CD14-positive monocyte (primary cell): ENCODE measurements at regions of chr14 and their contacts with region 1.

Region 1: DNA sequence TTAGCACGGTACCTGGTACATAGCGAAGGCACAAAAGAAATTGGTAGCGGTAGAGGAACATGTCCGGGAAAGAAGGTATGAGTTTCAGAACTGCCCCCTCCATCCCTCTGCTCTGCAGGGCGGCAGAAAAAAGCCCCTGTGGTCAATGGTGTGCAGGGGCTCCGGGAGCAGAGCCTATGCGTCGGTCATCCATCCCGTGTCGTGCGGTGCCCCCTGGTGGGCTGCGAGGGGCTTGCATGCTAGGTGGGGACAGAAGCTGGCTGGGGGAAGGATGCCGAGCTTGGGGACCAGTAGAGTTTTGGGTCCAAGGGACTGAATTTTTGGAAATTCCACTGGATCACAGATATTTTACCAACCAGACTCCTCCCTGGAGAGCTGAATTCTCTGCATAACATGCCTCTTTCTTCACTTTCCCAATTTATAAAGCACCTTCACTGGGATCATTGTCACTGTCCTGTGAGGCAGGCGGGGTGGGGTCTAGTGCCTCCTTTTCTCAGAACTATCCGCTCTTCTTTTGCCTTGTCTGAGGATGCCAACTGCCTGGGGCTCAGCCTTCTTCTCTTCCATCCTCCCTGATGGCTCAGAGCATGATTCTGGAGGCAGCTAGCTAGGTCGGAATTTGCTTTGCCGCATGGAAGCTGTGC is 148.7 kb downstream of the SMOC1 start:
- DNase-seq: peak; percentile 29 to 46 (median 34)
- H3K4me3 ChIP-seq: no peak overlapping the region
- H3K4me3 Mint-ChIP-seq: no peak overlapping the region
- H3K27ac ChIP-seq: no peak overlapping the region
- H3K27ac Mint-ChIP-seq: no peak overlapping the region
- H3K4me1 ChIP-seq: no peaks in the 10 kb centered on the region
- H3K4me1 Mint-ChIP-seq: no peaks in the 10 kb centered on the region
- H3K27me3 ChIP-seq: no peaks in the 10 kb centered on the region
- H3K27me3 Mint-ChIP-seq: peaks cover 0 to 9% (median 0%) of the 10 kb centered on the region in 3 donors
- CTCF ChIP-seq: peak; percentile 85

Region 2: DNA sequence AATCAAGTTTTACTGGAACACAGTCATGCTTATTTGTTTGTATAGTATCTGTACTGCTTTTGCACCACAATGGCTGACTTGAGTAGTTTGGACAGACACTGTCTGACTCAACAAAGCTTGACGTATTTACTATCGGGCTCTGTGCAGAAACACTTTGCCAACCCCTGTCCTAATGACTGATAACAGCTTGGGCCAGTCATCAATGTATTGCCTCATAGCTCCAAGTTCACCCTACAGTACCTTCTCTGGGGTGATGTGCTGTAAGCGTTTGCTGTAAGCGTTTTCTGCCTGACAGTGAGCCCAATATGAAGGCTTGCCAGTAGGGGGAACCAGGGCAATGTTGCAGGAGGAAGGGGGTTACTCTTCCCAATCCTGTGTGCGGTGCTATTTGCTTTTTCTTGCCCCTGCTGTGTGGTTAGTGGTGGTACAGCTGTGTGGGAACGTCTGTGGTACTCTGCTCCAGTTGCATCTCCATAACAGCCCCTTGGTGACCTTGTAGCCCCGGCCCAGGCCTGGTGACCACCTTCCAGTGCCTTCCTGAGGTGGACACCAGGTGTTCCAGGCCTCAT is 447.8 kb before region 1 on chr14:
- intact Hi-C with region 1: loop called in 1 of 2 experiments (anchors 10 kb)
- DNase-seq: peak; percentile 14 to 45 (median 20)
- H3K4me3 ChIP-seq: no peak overlapping the region
- H3K4me3 Mint-ChIP-seq: no peak overlapping the region
- H3K27ac ChIP-seq: no peak overlapping the region
- H3K27ac Mint-ChIP-seq: peak overlapping the region in 1 of 7 donors; percentile 85
- H3K4me1 ChIP-seq: peaks cover 4 to 7% of the 10 kb centered on the region in 2 donors
- H3K4me1 Mint-ChIP-seq: peaks cover 19% of the 10 kb centered on the region
- H3K27me3 ChIP-seq: peaks cover 0 to 30% of the 10 kb centered on the region in 2 donors
- H3K27me3 Mint-ChIP-seq: peaks cover 31 to 40% (median 32%) of the 10 kb centered on the region in 3 donors
- CTCF ChIP-seq: peak; percentile 42

Region 3: DNA sequence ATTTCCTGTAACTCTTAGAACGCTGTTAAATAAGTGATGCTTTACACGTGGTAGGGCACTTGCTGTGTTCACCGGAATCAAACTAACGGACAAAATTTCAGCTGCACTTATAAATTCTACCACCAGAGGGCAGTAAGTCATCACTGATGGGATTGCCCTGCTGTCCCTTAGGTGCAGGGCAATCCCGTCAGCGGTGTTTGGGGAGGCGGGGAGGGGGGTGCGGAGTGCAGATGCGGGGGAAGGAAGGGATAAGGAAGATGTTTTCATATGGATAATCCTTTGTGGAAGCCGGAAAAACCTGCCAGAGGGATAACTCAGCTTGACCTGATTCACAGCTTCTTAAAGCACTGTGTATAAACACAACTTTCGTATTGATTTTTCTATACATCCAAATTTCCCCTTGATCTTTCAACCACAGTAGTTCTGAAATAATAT is 209.1 kb before region 1 on chr14:
- intact Hi-C with region 1: loop called (anchors 1 to 2 kb)
- DNase-seq: peak; percentile 44 to 63 (median 53)
- H3K4me3 ChIP-seq: no peak overlapping the region
- H3K4me3 Mint-ChIP-seq: no peak overlapping the region
- H3K27ac ChIP-seq: no peak overlapping the region
- H3K27ac Mint-ChIP-seq: no peak overlapping the region
- H3K4me1 ChIP-seq: no peaks in the 10 kb centered on the region
- H3K4me1 Mint-ChIP-seq: peaks cover 2% of the 10 kb centered on the region
- H3K27me3 ChIP-seq: no peaks in the 10 kb centered on the region
- H3K27me3 Mint-ChIP-seq: peaks cover 0 to 2% (median 0%) of the 10 kb centered on the region in 3 donors
- CTCF ChIP-seq: peak; percentile 84

Region 4: GRCh38 chr14:70052990-70053389 is 25.1 kb after region 1 on chr14:
- intact Hi-C with region 1: no loop called
- DNase-seq: no peak
- H3K4me3 ChIP-seq: no peak overlapping the region
- H3K4me3 Mint-ChIP-seq: no peak overlapping the region
- H3K27ac ChIP-seq: no peak overlapping the region
- H3K27ac Mint-ChIP-seq: peak overlapping the region in 1 of 7 donors; percentile 12
- H3K4me1 ChIP-seq: no peaks in the 10 kb centered on the region
- H3K4me1 Mint-ChIP-seq: no peaks in the 10 kb centered on the region
- H3K27me3 ChIP-seq: no peaks in the 10 kb centered on the region
- H3K27me3 Mint-ChIP-seq: peaks cover 0 to 5% (median 2%) of the 10 kb centered on the region in 3 donors
- CTCF ChIP-seq: no peak

Region 5: GRCh38 chr14:70188659-70189455 is 160.9 kb after region 1 on chr14 and contains the start of gene SLC8A3:
- intact Hi-C with region 1: no loop called
- DNase-seq: peak in 1 of 3 donors; percentile 22
- H3K4me3 ChIP-seq: peak within 1 kb of the TSS; percentile 2 to 72 (median 10)
- H3K4me3 Mint-ChIP-seq: peak within 1 kb of the TSS; percentile 75 to 89
- H3K27ac ChIP-seq: no peak within 1 kb of the TSS
- H3K27ac Mint-ChIP-seq: no peak within 1 kb of the TSS
- H3K4me1 ChIP-seq: peaks cover 18 to 27% of the 10 kb centered on the region in 2 donors
- H3K4me1 Mint-ChIP-seq: peaks cover 23% of the 10 kb centered on the region
- H3K27me3 ChIP-seq: peaks cover 41 to 60% of the 10 kb centered on the region in 2 donors
- H3K27me3 Mint-ChIP-seq: peaks cover 50 to 77% (median 53%) of the 10 kb centered on the region in 3 donors
- CTCF ChIP-seq: no peak
- polyA plus RNA-seq, gene SLC8A3: 0.01 TPM in 1 of 3 donors, not detected in the others